Activated CD4-positive, alpha-beta memory T cell treated with anti-CD3 and anti-CD28 coated beads for 36 hours (primary cell): ENCODE measurements at regions of chr14 and their contacts with region 1.

Region 1: DNA sequence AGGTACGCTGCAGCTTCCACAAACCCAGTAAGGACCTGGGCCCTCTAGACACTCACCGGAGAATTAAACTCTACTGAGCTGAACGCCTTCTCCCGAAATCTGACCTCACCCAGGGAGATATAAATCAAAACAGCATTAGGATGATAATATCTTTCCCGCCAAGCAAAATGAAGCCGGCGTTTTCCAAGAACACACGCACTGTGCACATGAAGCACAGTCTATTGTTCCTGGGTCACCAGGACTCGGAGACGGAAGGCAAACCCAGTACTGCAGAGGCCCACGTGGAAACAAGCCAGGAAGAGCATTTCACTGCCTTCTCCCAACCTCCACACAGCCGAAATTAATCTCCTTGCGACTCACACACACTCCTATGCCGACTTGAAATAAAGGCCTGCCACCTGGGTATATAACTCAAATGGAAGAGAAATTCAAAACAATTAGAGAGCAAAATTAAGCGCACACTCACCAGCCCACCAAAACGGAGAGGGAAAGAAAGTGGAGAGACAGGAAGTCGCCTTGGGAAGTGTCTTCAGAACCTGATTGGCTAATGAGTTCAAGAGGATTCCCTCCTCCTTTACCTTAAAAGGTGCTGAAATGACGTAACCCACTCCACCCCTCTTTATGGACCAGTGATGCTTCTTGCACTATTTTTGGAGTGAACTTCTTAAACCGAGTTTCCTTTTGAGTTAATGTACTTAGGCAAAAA is at the start of gene CCNB1IP1:
- DNase-seq: peak; percentile 54
- H3K4me3 Mint-ChIP-seq: peak within 1 kb of the TSS; percentile 99
- H3K27ac Mint-ChIP-seq: peak within 1 kb of the TSS; percentile 92
- H3K4me1 Mint-ChIP-seq: peaks cover 36% of the 10 kb centered on the region
- H3K27me3 Mint-ChIP-seq: no peaks in the 10 kb centered on the region
- total RNA-seq, gene CCNB1IP1: 70.2 to 77.4 TPM

Region 2: DNA sequence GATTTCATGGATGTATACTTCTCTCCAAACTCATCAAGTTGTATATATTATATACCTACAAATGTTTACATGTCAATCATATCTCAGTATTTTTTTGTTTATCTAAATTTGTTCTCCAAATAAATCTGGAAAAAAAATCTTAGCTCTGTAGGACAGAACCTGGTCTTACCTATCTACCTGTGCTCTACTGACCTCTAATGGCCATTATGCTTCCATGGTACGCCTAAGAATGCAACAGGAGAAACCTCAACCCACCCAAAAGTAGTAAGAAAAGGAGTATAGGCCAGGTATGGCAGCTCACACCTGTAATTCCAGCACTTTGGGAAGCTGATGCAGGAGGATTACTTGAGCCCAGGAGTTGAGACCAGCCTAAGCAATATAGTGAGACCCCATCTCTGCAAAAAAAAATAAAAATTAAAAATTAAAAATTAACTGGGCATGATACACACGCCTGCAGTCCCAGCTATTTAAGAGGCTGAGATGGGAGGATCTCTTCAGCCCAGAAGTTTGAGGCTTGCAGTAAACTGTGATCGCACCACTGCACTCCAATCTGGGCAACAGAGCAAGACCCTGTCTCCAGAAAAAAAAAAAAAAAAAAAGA is 85.2 kb before region 1 on chr14:
- CTCF ChIA-PET with region 1: no interaction called
- POLR2A ChIA-PET with region 1: no interaction called
- intact Hi-C with region 1: no loop called
- DNase-seq: no peak
- H3K4me3 Mint-ChIP-seq: no peak overlapping the region
- H3K27ac Mint-ChIP-seq: no peak overlapping the region
- H3K4me1 Mint-ChIP-seq: no peaks in the 10 kb centered on the region
- H3K27me3 Mint-ChIP-seq: no peaks in the 10 kb centered on the region

Region 3: DNA sequence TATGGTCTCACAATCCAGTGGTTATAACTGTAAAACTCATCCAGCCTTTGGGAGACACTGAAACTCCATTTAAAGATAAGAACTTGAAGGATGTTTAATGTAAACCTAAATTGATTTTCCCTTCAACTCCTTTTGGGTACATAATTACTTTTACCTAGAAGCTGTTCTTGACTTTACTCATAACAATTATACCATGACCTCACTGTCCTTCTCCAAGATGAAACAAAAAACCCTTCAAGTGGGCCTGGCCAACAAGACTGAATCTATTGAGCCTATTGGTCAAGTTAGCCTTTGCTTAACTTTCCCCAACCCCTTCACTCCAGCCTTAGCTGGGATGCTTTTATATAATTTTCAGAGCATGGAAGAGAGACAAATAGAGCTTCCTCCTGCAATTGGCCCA is 33.0 kb after region 1 on chr14:
- CTCF ChIA-PET with region 1: interaction called, 7 read pairs
- POLR2A ChIA-PET with region 1: no interaction called
- intact Hi-C with region 1: loop called (anchors 2 kb)
- DNase-seq: no peak
- H3K4me3 Mint-ChIP-seq: no peak overlapping the region
- H3K27ac Mint-ChIP-seq: no peak overlapping the region
- H3K4me1 Mint-ChIP-seq: peaks cover 29% of the 10 kb centered on the region
- H3K27me3 Mint-ChIP-seq: no peaks in the 10 kb centered on the region

Region 4: GRCh38 chr14:20454516-20455354 is 121.8 kb after region 1 on chr14 and contains the starts of genes APEX1 and OSGEP:
- CTCF ChIA-PET with region 1: interaction called, 8 read pairs
- POLR2A ChIA-PET with region 1: no interaction called
- intact Hi-C with region 1: loop called (anchors 1 kb)
- DNase-seq: peak; percentile 99
- H3K4me3 Mint-ChIP-seq: peak within 1 kb of the TSS; percentile 13
- H3K27ac Mint-ChIP-seq: no peak within 1 kb of the TSS
- H3K4me1 Mint-ChIP-seq: peaks cover 22% of the 10 kb centered on the region
- H3K27me3 Mint-ChIP-seq: no peaks in the 10 kb centered on the region
- total RNA-seq, gene APEX1: 186 to 193 TPM
- total RNA-seq, gene OSGEP: 39.2 to 41.0 TPM